K562 (cell line): ENCODE measurements at regions of chr19 and their contacts with region 1.

Region 1: DNA sequence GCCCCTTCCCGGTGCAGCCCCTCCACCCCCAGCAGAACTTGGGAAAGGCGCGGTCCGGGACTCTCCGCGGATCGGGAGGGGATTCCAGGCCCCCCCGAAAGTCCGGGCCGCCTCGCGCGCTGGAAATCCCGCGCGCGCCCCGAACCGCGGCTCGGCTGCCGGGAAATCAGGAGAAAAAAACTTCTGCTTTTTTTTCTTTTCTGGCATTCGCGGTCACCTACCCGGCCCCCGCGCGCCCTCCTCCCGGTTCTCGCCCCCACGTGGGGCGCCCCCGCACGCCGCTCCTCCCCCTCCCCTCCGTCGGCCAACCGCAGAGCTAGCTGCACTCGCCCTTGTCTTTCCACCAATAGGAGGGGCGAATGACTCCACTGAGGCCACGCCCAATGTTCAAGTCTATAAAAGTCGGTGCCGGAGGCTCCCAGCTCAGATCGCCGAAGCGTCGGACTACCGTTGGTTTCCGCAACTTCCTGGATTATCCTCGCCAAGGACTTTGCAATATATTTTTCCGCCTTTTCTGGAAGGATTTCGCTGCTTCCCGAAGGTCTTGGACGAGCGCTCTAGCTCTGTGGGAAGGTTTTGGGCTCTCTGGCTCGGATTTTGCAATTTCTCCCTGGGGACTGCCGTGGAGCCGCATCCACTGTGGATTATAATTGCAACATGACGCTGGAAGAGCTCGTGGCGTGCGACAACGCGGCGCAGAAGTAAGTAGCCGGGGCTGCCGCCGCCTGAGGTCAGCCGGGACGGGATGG is at the start of gene GADD45B:
- DNase-seq: peak; percentile 97 to 100 (median 98)
- ATAC-seq: peak; percentile 88
- H3K4me3 ChIP-seq: peak within 1 kb of the TSS; percentile 49
- H3K27ac ChIP-seq: peak within 1 kb of the TSS; percentile 25; the same call in 1 of the 3 replicates
- H3K4me1 ChIP-seq: peaks cover 2 to 46% of the 10 kb centered on the region in 2 experiments; a peak in 4 of 5 replicates
- H3K27me3 ChIP-seq: peaks cover 0 to 9% of the 10 kb centered on the region in 2 experiments; a peak in 2 of 5 replicates
- CTCF ChIP-seq: no peak
- EP300 ChIP-seq: no peak
- POLR2A ChIP-seq: peak; percentile 99
- RAD21 ChIP-seq: peak; percentile 11 to 20; a peak in 2 of 4 replicates
- polyA plus RNA-seq, gene GADD45B: 0.06 to 0.18 TPM

Region 2: DNA sequence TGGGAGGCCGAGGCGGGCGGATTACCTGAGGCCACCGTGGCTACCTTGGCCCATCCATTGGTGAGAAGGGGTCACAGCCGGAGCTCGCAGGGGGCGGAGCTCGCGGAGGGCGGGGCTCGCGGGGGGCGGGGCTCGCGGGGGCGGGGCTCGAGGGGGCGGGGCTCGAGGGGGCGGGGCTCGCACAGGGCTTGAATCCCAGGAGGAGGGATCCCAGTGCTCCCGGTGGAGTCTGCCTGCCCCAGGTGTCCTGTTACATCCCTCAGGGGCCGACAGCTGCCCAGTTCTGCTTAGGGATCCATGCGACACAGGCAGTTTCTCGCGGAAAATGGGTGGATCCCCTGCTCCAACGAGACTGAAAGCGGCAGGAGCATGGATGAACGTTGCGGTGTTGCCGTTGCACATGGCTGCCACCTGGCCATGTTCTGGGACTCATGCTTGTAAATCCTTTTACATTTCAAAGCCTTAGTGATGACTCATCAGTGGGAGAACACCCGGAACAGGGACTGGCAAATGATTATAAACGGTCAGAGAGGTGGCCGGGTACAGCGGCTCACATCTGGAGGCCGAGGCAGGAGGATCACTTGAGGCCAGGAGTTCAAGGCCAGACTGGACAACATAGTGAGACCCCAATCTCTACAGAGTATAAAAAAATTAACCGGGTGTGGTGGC is 90.7 kb before region 1 on chr19:
- CTCF ChIA-PET with region 1: no interaction called
- POLR2A ChIA-PET with region 1: no interaction called
- in situ Hi-C with region 1: no loop called
- intact Hi-C with region 1: no loop called
- DNase-seq: peak; percentile 77 to 95 (median 94)
- ATAC-seq: peak; percentile 80
- H3K4me3 ChIP-seq: peak overlapping the region; percentile 38
- H3K27ac ChIP-seq: peak overlapping the region; percentile 65; the same call in 2 of the 3 replicates
- H3K4me1 ChIP-seq: peaks cover 6 to 21% of the 10 kb centered on the region in 2 experiments; a peak in 4 of 5 replicates
- H3K27me3 ChIP-seq: no peaks in the 10 kb centered on the region
- CTCF ChIP-seq: no peak
- EP300 ChIP-seq: no peak
- POLR2A ChIP-seq: no peak; the same call in 1 of the 2 replicates
- RAD21 ChIP-seq: peak in 1 of 2 experiments; percentile 20; a peak in 1 of 4 replicates

Region 3: GRCh38 chr19:2461751-2462634 is 13.9 kb before region 1 on chr19:
- CTCF ChIA-PET with region 1: no interaction called
- POLR2A ChIA-PET with region 1: interaction called, 20 read pairs
- in situ Hi-C with region 1: no loop called
- intact Hi-C with region 1: no loop called
- DNase-seq: peak in 3 of 4 experiments; percentile 24 to 48 (median 41)
- ATAC-seq: peak; percentile 74
- H3K4me3 ChIP-seq: peak overlapping the region; percentile 28
- H3K27ac ChIP-seq: no peak overlapping the region
- H3K4me1 ChIP-seq: peaks cover 0 to 24% of the 10 kb centered on the region in 2 experiments; a peak in 2 of 5 replicates
- H3K27me3 ChIP-seq: no peaks in the 10 kb centered on the region
- CTCF ChIP-seq: no peak
- EP300 ChIP-seq: no peak
- POLR2A ChIP-seq: no peak
- RAD21 ChIP-seq: no peak

Region 4: DNA sequence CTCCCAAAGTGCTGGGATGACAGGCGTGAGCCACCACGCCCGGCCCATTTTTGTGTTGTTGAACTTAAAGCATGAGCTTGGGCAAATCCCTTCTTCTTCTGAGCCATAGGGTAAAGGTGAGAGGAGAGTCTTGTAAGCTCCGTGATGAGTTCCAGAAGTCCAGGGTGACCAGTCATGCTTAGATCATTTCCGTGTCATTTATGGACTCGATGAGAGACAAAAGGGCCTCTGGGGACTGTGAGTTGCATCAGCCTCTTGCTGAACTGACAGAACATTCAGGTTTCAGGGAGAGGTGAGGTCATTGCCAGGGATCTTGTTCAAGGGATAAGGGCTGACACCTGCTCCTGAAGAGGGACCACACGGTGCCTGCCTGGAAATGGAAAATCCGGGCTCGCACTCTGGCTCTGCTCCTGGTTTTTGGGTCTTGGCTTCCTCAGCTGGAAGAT is 53.6 kb after region 1 on chr19:
- CTCF ChIA-PET with region 1: no interaction called
- POLR2A ChIA-PET with region 1: interaction called, 13 read pairs
- in situ Hi-C with region 1: no loop called
- intact Hi-C with region 1: no loop called
- DNase-seq: peak in 1 of 4 experiments; percentile 46
- ATAC-seq: peak; percentile 88
- H3K4me3 ChIP-seq: no peak overlapping the region
- H3K27ac ChIP-seq: no peak overlapping the region; the same call in 2 of the 3 replicates
- H3K4me1 ChIP-seq: peaks cover 5 to 24% of the 10 kb centered on the region in 2 experiments
- H3K27me3 ChIP-seq: no peaks in the 10 kb centered on the region; a peak in 1 of 5 replicates
- CTCF ChIP-seq: no peak
- EP300 ChIP-seq: peak; percentile 86
- POLR2A ChIP-seq: no peak
- RAD21 ChIP-seq: peak in 1 of 2 experiments; percentile 24; a peak in 1 of 4 replicates

Region 5: GRCh38 chr19:2552859-2553258 is 77.0 kb after region 1 on chr19:
- CTCF ChIA-PET with region 1: interaction called, 3 read pairs
- POLR2A ChIA-PET with region 1: interaction called, 12 read pairs
- in situ Hi-C with region 1: no loop called
- intact Hi-C with region 1: no loop called
- DNase-seq: peak in 1 of 4 experiments; percentile 14
- ATAC-seq: no peak
- H3K4me3 ChIP-seq: peak overlapping the region; percentile 0; the same call in 1 of the 2 replicates
- H3K27ac ChIP-seq: peak overlapping the region; percentile 23; the same call in 1 of the 3 replicates
- H3K4me1 ChIP-seq: peaks cover 0 to 28% of the 10 kb centered on the region in 2 experiments; a peak in 2 of 5 replicates
- H3K27me3 ChIP-seq: peaks cover 5 to 22% of the 10 kb centered on the region in 2 experiments; a peak in 3 of 5 replicates
- CTCF ChIP-seq: no peak
- EP300 ChIP-seq: no peak
- POLR2A ChIP-seq: no peak
- RAD21 ChIP-seq: no peak

Region 6: GRCh38 chr19:2602391-2603181 is 126.7 kb after region 1 on chr19:
- CTCF ChIA-PET with region 1: no interaction called
- POLR2A ChIA-PET with region 1: interaction called, 17 read pairs
- in situ Hi-C with region 1: no loop called
- intact Hi-C with region 1: no loop called
- DNase-seq: no peak
- ATAC-seq: no peak
- H3K4me3 ChIP-seq: no peak overlapping the region
- H3K27ac ChIP-seq: no peak overlapping the region
- H3K4me1 ChIP-seq: peaks cover 3 to 15% of the 10 kb centered on the region in 2 experiments; a peak in 4 of 5 replicates
- H3K27me3 ChIP-seq: peaks cover 18 to 43% of the 10 kb centered on the region in 2 experiments
- CTCF ChIP-seq: no peak
- EP300 ChIP-seq: no peak
- POLR2A ChIP-seq: no peak
- RAD21 ChIP-seq: no peak

Region 7: GRCh38 chr19:2636897-2637683 is 161.2 kb after region 1 on chr19:
- CTCF ChIA-PET with region 1: interaction called, 11 read pairs
- POLR2A ChIA-PET with region 1: interaction called, 9 read pairs
- in situ Hi-C with region 1: no loop called
- intact Hi-C with region 1: no loop called
- DNase-seq: peak; percentile 64 to 87 (median 84)
- ATAC-seq: peak; percentile 91
- H3K4me3 ChIP-seq: no peak overlapping the region
- H3K27ac ChIP-seq: no peak overlapping the region
- H3K4me1 ChIP-seq: peaks cover 0 to 22% of the 10 kb centered on the region in 2 experiments; a peak in 2 of 5 replicates
- H3K27me3 ChIP-seq: peaks cover 0 to 35% of the 10 kb centered on the region in 2 experiments; a peak in 3 of 5 replicates
- CTCF ChIP-seq: peak; percentile 77 to 95 (median 83)
- EP300 ChIP-seq: no peak
- POLR2A ChIP-seq: no peak
- RAD21 ChIP-seq: peak; percentile 52 to 77

Region 8: GRCh38 chr19:2711172-2711874 is 235.4 kb after region 1 on chr19:
- CTCF ChIA-PET with region 1: no interaction called
- POLR2A ChIA-PET with region 1: no interaction called
- in situ Hi-C with region 1: no loop called
- intact Hi-C with region 1: no loop called
- DNase-seq: peak in 3 of 4 experiments; percentile 38 to 53 (median 51)
- ATAC-seq: peak; percentile 49; the same call in 2 of the 3 replicates
- H3K4me3 ChIP-seq: no peak overlapping the region
- H3K27ac ChIP-seq: no peak overlapping the region
- H3K4me1 ChIP-seq: no peaks in the 10 kb centered on the region; a peak in 2 of 5 replicates
- H3K27me3 ChIP-seq: peaks cover 4 to 15% of the 10 kb centered on the region in 2 experiments; a peak in 3 of 5 replicates
- CTCF ChIP-seq: no peak
- EP300 ChIP-seq: no peak
- POLR2A ChIP-seq: no peak
- RAD21 ChIP-seq: no peak